Activated CD8-positive, alpha-beta T cell treated with anti-CD3 and anti-CD28 coated beads, Interleukin-2, amount 10 ng/mL, durations not matched to agents 7 days and 5 days (primary cell): ENCODE measurements at regions of chr3 and their contacts with region 1.

Region 1: GRCh38 chr3:172595641-172596393 is 72.6 kb upstream of the TNFSF10 start:
- DNase-seq: peak; percentile 69
- ATAC-seq: no peak
- H3K4me3 Mint-ChIP-seq: peak overlapping the region; percentile 83
- H3K27ac Mint-ChIP-seq: peak overlapping the region; percentile 76
- H3K4me1 Mint-ChIP-seq: peaks cover 58% of the 10 kb centered on the region
- H3K27me3 Mint-ChIP-seq: no peaks in the 10 kb centered on the region

Region 2: DNA sequence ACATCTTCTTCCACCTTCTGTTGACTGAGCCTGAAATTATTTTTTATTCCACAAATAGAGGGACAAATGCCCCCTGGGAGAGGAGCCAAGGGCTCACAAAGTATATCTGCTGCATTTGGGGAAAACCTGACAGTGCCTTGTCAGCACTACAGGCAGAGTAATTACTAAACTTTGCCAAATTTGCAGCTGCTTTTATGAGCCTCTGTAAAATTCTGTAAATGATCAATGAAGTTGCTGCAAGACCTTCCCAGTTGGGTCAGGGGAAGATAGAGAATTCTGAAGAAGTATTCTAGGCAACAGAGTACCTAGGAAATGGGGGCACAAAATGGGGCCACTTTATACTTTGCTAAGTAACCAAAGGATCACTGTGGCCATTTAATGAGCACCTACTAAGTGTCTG is 158.1 kb before region 1 on chr3:
- CTCF ChIA-PET with region 1: no interaction called
- POLR2A ChIA-PET with region 1: no interaction called
- DNase-seq: no peak
- ATAC-seq: no peak
- H3K4me3 Mint-ChIP-seq: no peak overlapping the region
- H3K27ac Mint-ChIP-seq: no peak overlapping the region
- H3K4me1 Mint-ChIP-seq: no peaks in the 10 kb centered on the region
- H3K27me3 Mint-ChIP-seq: peaks cover 29% of the 10 kb centered on the region

Region 3: DNA sequence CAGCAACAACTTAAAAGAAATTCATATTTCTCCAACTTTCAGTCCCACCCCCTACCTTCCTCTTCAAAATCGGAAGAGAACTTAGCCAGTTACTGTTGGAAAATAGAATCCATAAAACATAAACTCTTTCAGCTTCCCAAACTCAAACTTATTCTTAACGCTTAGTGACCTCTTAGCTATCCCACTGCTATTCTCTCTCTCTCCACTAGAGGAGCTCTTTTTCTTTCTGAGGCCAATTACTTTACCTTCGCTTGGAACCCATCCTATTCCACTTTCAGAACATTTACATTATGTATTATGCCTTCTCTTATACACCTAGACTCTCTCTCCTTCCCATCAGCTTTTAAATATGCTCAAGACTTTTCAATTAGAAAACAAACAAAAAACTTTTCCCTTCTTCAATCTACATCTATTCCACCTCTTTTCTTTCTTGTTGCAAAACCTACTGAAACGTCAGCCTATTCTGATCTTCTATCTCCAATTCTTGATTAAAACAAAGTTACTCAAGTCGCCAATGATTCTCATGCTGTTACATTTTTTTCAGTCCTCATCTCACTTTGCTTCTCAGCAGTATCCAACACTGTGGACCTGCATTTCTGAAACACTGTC is 134.2 kb before region 1 on chr3:
- CTCF ChIA-PET with region 1: interaction called, 29 read pairs
- POLR2A ChIA-PET with region 1: interaction called, 3 read pairs
- DNase-seq: no peak
- ATAC-seq: peak; percentile 61
- H3K4me3 Mint-ChIP-seq: no peak overlapping the region
- H3K27ac Mint-ChIP-seq: no peak overlapping the region
- H3K4me1 Mint-ChIP-seq: no peaks in the 10 kb centered on the region
- H3K27me3 Mint-ChIP-seq: peaks cover 4% of the 10 kb centered on the region

Region 4: DNA sequence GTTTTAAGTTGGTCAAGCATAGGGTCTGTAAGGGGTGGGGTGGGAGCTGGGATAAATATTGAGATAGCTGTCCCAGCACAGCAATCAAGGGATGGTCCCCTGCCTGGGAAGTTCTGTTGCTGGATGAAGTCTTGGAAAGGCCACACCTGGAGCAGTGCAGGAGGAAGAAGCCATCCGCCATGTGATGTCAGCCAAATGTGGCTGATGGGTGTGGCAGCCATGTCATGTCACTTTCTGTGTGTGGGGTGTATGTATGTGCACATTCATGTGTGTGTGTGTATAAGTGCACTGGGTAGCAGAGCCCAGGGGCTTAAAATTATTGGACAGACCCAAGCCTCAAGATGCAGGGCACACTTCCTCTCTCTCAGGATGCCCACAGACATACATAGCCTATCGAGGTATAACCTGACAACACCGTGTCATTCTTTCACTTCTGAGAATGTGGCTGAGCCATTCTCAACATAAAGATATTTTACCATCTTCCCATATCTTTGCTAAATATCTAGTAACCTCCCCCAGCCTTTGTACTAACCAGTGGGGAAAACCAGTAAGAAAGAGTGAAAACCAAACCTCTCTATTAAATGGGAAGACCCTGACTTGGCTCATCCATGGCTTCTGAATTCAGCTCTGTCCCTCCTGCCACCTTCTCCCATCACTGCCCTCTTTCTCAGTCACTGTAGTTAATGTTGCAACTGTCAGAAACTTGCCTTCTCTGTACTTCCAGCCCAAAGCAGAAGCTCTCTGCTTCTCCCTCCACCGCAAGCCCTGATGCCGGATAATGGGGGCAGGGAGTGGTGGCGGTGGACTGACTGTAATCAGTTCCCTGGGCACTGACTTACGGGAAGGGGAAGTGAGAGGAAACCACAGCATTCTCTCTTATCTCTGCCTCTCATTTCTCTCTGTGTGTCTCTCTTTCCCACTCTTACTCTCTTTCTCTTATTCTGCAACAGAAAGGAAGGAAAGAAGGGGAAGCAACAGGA is 83.7 kb before region 1 on chr3:
- CTCF ChIA-PET with region 1: interaction called, 214 read pairs
- POLR2A ChIA-PET with region 1: interaction called, 138 read pairs
- DNase-seq: peak; percentile 75
- ATAC-seq: peak; percentile 71
- H3K4me3 Mint-ChIP-seq: peak overlapping the region; percentile 68
- H3K27ac Mint-ChIP-seq: peak overlapping the region; percentile 90
- H3K4me1 Mint-ChIP-seq: peaks cover 88% of the 10 kb centered on the region
- H3K27me3 Mint-ChIP-seq: no peaks in the 10 kb centered on the region

Region 5: GRCh38 chr3:172536993-172537419 is 58.8 kb before region 1 on chr3:
- CTCF ChIA-PET with region 1: interaction called, 13 read pairs
- POLR2A ChIA-PET with region 1: no interaction called
- DNase-seq: no peak
- ATAC-seq: peak; percentile 66
- H3K4me3 Mint-ChIP-seq: peak overlapping the region; percentile 12
- H3K27ac Mint-ChIP-seq: peak overlapping the region; percentile 96
- H3K4me1 Mint-ChIP-seq: peaks cover 67% of the 10 kb centered on the region
- H3K27me3 Mint-ChIP-seq: no peaks in the 10 kb centered on the region

Region 6: DNA sequence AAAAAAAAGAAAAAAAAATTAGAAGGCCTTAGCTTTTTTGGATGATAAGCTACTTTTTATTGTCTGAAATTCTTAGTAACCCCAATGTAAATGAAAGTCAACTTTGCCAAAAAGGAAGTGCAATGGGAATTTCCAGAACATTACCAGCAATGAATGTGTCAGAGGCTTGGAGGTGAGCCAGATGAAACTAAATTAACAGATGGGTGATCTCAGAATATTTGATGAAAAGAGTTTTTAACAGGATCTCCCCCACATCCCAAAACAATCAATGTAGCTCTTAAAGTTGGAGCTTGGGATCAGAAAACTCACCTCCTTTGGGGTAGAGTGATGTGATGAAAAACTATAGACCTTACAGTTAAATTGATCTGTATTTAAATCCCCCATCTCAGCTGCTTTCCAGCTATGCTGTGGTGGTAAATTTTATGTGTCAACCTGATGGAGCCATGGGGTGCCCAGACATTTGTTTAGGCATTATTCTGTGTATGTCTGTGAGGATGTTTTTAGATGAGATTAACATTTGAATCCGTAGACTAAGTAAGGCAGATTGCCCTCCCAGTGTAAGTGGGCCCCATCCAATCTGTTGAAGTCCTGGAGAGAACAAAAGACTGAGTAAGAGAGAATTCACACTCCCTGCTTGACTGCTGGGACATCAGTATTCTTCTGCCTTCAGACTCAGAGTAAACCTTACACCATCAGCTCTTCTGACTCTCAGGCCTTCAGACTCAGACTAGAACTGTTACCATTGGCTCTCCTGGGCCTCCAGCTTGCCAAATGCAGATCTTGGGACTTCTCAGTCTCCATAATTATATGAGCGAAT is 11.7 kb after region 1 on chr3:
- CTCF ChIA-PET with region 1: interaction called, 44 read pairs
- POLR2A ChIA-PET with region 1: no interaction called
- DNase-seq: no peak
- ATAC-seq: no peak
- H3K4me3 Mint-ChIP-seq: no peak overlapping the region
- H3K27ac Mint-ChIP-seq: no peak overlapping the region
- H3K4me1 Mint-ChIP-seq: peaks cover 1% of the 10 kb centered on the region
- H3K27me3 Mint-ChIP-seq: no peaks in the 10 kb centered on the region

Region 7: DNA sequence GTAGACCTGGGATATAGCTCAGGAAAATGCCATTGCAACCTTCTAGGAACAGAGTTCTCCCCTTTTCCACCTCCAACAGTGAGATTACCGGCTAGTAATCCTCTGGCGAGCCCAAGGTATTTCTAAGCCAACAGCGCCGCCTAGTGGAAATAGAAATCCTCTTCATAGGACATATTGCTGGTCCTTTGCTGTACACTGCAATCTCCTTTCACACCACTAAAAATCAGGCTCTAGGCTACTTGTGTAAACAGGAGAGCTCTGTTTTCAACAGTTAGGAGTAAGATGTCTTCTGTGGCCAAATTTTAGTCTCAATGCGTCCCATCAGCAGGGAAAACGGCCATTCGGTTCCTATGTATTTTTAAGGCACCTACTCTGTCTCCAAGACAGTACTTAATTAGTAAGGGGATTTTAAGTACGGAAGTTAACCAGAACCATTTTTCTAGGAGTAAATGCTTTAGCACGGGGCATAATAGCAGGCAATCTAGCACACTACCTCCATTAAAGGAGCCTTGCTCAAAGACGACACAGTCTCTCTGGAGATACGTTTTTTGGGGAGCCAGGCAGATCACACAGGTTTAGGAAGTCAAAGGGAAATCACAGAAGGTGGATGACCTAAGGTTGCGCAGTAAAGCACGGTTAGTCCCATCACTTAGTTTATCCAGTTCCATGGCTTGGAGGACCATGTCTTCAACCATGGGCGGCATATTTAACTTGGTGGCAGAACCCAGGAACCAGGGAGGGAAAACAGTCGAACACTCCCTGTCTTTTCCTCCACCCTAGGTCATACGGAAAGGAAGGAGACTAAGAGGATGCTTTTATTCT is 71.3 kb after region 1 on chr3:
- CTCF ChIA-PET with region 1: interaction called, 69 read pairs
- POLR2A ChIA-PET with region 1: no interaction called
- DNase-seq: peak; percentile 90
- ATAC-seq: peak; percentile 100
- H3K4me3 Mint-ChIP-seq: no peak overlapping the region
- H3K27ac Mint-ChIP-seq: no peak overlapping the region
- H3K4me1 Mint-ChIP-seq: peaks cover 19% of the 10 kb centered on the region
- H3K27me3 Mint-ChIP-seq: peaks cover 5% of the 10 kb centered on the region

Region 8: DNA sequence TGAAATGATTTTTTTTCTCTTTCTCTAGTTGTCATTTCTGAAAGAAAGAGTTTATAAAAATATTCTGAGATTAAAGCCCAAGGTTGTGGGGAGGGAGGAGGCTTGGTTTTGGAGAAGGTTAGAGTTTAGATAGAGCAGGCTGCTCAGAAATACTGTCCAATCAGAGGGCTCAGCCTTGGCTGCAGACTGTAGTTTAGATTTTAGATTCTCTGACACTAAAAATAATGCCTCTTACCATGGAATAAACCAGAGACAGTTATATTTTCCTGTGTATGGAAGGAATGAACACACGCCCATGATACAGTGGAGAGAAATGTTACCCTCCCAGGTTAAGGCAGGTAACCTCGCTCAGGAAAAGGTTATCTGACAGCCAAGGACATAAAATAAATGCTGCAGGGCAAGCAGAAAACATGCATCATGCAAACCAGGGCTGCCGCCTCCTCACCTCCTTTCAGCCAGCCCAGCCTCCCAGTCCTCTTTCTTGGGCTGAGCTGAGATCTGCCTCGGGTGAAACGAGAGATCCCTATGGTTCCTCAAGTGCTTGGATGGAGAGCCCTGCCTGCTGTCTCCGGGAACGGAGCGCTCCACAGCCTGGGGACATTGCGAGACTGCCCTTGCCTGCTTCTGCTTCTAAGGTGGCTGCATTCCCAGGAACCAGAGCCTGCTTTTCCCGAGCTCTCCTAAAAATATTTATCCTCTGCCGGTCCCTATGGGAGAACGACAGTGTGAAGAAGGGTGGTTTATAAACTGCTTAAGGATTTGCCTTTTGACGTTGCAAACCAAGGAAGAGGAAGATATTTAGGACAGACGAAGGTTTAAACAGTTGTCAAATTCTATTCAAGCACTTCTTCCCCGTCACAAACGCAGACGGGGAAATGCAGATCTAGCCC is 114.2 kb after region 1 on chr3:
- CTCF ChIA-PET with region 1: no interaction called
- POLR2A ChIA-PET with region 1: no interaction called
- DNase-seq: no peak
- ATAC-seq: peak; percentile 8
- H3K4me3 Mint-ChIP-seq: peak overlapping the region; percentile 92
- H3K27ac Mint-ChIP-seq: peak overlapping the region; percentile 73
- H3K4me1 Mint-ChIP-seq: peaks cover 18% of the 10 kb centered on the region
- H3K27me3 Mint-ChIP-seq: peaks cover 3% of the 10 kb centered on the region

Region 9: DNA sequence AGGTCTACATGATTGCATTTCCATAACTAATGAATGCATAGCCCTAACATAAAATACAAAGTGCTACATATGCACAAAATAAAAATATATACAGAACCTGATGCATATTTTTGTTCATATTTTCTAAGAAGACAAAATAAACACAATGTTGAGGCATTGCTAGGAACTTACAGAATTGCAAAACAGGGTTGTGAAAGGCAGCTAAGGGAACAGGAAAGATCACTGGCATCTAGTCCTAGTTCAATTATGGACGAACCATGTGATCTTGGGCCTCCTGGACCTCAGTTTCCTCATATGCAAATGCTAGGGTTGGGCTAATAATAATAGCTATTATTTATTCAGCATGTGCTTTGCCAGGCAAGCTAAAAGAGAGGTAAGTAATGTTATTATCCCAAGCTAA is 130.6 kb after region 1 on chr3:
- CTCF ChIA-PET with region 1: no interaction called
- POLR2A ChIA-PET with region 1: no interaction called
- DNase-seq: no peak
- ATAC-seq: no peak
- H3K4me3 Mint-ChIP-seq: no peak overlapping the region
- H3K27ac Mint-ChIP-seq: no peak overlapping the region
- H3K4me1 Mint-ChIP-seq: no peaks in the 10 kb centered on the region
- H3K27me3 Mint-ChIP-seq: peaks cover 15% of the 10 kb centered on the region